Transverse colon (tissue), 4 donors: ENCODE measurements at regions of chr9 and their contacts with region 1.

Region 1: GRCh38 chr9:91898451-91899218 is 51.4 kb downstream of the ROR2 start:
- DNase-seq: peak; percentile 37
- H3K4me3 ChIP-seq: no peak overlapping the region
- H3K27ac ChIP-seq: peak overlapping the region; percentile 51 to 78 (median 73)
- H3K4me1 ChIP-seq: peaks cover 34 to 72% (median 49%) of the 10 kb centered on the region in 4 donors
- H3K27me3 ChIP-seq: no peaks in the 10 kb centered on the region
- CTCF ChIP-seq: no peak
- EP300 ChIP-seq: peak; percentile 70
- POLR2A ChIP-seq: peak; percentile 13

Region 2: DNA sequence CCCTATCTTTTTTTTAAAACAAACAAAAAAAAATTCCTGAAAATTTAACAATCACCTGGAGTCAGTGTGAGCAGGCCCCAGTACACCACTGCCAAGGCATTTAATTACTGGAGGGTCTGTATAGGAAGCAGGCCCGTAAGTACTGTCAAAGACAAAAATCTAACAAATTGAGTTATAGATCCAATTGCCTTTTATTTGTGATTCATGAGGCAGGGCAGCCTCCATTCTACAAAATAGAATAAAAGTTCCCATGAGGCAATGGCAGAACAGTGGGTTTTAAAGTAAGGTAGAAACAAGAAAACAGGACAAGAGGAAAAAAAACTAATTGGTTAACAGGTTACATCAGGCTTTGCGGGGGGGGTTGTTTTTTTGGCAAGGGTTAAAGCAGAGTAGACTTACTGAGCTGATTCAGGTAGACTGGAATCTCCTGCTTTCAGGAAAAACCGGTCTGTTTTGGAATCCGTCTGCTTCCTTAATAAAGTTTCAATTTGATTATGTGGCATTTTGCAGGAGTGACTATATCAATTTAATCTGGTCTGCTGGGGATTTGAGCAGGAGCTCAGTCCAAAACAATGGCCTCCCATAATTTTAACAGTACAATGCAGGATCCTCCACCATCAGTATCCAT is 585.8 kb before region 1 on chr9:
- in situ Hi-C with region 1: no loop called
- intact Hi-C with region 1: no loop called
- DNase-seq: no peak
- H3K4me3 ChIP-seq: no peak overlapping the region
- H3K27ac ChIP-seq: no peak overlapping the region
- H3K4me1 ChIP-seq: peaks cover 0 to 16% (median 6%) of the 10 kb centered on the region in 4 donors
- H3K27me3 ChIP-seq: no peaks in the 10 kb centered on the region
- CTCF ChIP-seq: no peak
- EP300 ChIP-seq: no peak
- POLR2A ChIP-seq: no peak

Region 3: GRCh38 chr9:91782708-91783214 is 115.9 kb before region 1 on chr9:
- in situ Hi-C with region 1: no loop called
- intact Hi-C with region 1: loop called (anchors 5 kb)
- DNase-seq: no peak
- H3K4me3 ChIP-seq: no peak overlapping the region
- H3K27ac ChIP-seq: peak overlapping the region in 3 of 4 donors; percentile 45 to 50 (median 46)
- H3K4me1 ChIP-seq: peaks cover 0 to 10% (median 1%) of the 10 kb centered on the region in 4 donors
- H3K27me3 ChIP-seq: no peaks in the 10 kb centered on the region
- CTCF ChIP-seq: no peak
- EP300 ChIP-seq: no peak
- POLR2A ChIP-seq: no peak

Region 4: DNA sequence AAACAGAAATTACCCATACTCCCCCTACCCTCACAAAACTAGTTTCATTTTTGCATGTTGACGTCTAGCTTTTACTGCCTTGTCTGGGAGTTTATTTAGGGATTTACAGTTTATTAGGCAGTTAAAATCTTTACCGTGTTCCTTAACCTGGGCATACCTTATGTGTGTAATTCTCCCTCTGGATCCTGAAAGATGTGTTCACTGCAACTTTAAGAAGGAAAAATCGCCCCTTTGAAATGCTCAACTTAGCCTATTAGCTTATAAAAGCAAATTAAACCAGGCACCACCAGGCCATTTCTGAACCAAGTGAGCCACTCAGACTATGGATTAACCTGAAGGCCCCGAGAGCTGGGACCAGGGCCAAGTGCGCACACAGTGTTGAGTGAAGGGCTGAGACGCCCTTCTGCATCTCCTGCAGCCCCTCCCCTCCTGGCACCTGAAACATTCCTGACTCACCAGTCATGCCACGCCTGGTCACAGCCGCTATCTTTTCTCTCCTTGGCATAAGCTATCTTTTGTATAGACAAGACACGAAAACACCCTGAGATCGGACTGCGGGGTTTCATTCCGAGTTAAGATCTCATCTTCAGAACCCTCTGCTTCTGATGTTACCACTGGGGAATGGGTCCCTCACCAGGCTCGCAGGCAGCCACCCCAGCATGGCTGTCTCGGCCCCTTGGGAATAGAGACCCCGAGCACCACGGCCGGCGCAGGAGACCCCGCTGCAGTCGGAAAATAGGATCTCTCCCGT is 60.5 kb before region 1 on chr9:
- in situ Hi-C with region 1: no loop called
- intact Hi-C with region 1: loop called (anchors 10 kb)
- DNase-seq: peak; percentile 75
- H3K4me3 ChIP-seq: peak overlapping the region in 1 of 4 donors; percentile 11
- H3K27ac ChIP-seq: peak overlapping the region; percentile 62 to 70 (median 64)
- H3K4me1 ChIP-seq: peaks cover 7 to 45% (median 29%) of the 10 kb centered on the region in 4 donors
- H3K27me3 ChIP-seq: no peaks in the 10 kb centered on the region
- CTCF ChIP-seq: no peak
- EP300 ChIP-seq: no peak
- POLR2A ChIP-seq: no peak